CD8-positive, alpha-beta T cell (primary cell): ENCODE measurements at regions of chr2 and their contacts with region 1.

Region 1: DNA sequence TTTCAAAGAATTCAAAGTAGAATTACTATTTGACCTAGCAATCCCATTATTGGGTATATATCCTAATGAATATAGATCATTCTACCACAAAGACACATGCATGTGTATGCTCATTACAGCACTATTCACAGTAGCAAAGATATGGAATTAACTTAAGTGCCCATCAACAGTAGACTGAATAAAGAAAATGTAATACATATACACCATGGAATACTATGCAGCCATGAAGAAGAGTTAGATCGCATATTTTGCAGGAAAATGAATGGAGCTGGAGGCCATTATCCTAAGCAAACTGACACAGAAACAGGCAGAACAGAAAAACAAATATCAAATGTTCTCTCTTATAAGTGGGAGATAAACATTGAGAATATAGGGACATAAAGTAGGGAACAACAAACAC is 519.2 kb upstream of the REG3G start:
- DNase-seq: no peak
- ATAC-seq: no peak
- H3K4me3 ChIP-seq: no peak overlapping the region
- H3K4me3 Mint-ChIP-seq: no peak overlapping the region
- H3K27ac ChIP-seq: no peak overlapping the region
- H3K27ac Mint-ChIP-seq: no peak overlapping the region
- H3K4me1 ChIP-seq: no peaks in the 10 kb centered on the region
- H3K4me1 Mint-ChIP-seq: no peaks in the 10 kb centered on the region
- H3K27me3 ChIP-seq: no peaks in the 10 kb centered on the region
- H3K27me3 Mint-ChIP-seq: no peaks in the 10 kb centered on the region
- CTCF ChIP-seq: no peak

Region 2: DNA sequence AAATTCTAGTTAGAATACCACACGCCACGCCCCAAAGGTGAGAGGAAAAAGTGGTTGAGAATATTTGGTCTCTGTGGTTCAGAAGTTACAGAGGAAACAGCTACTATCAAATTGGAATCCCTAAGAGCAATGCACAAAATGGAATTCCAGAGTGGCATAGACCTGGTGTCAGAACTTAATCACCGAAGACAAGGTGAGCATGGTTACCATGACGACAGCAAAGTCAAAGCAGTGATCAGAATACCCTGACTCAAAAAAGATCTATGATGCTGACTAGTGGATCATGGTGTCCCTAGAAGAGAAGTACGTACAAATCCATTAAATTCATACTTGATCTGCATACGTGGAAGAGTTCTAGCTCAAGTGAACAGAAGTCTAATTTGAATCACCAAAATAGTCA is 998.6 kb before region 1 on chr2:
- CTCF ChIA-PET with region 1: no interaction called
- POLR2A ChIA-PET with region 1: no interaction called
- intact Hi-C with region 1: loop called in 1 of 2 experiments (anchors 5 kb)
- DNase-seq: no peak
- ATAC-seq: no peak
- H3K4me3 ChIP-seq: no peak overlapping the region
- H3K4me3 Mint-ChIP-seq: no peak overlapping the region
- H3K27ac ChIP-seq: no peak overlapping the region
- H3K27ac Mint-ChIP-seq: no peak overlapping the region
- H3K4me1 ChIP-seq: no peaks in the 10 kb centered on the region
- H3K4me1 Mint-ChIP-seq: no peaks in the 10 kb centered on the region
- H3K27me3 ChIP-seq: no peaks in the 10 kb centered on the region
- H3K27me3 Mint-ChIP-seq: no peaks in the 10 kb centered on the region
- CTCF ChIP-seq: no peak

Region 3: GRCh38 chr2:78418021-78418420 is 88.3 kb before region 1 on chr2:
- CTCF ChIA-PET with region 1: no interaction called
- POLR2A ChIA-PET with region 1: no interaction called
- intact Hi-C with region 1: no loop called
- DNase-seq: no peak
- ATAC-seq: no peak
- H3K4me3 ChIP-seq: no peak overlapping the region
- H3K4me3 Mint-ChIP-seq: no peak overlapping the region
- H3K27ac ChIP-seq: no peak overlapping the region
- H3K27ac Mint-ChIP-seq: no peak overlapping the region
- H3K4me1 ChIP-seq: no peaks in the 10 kb centered on the region
- H3K4me1 Mint-ChIP-seq: no peaks in the 10 kb centered on the region
- H3K27me3 ChIP-seq: no peaks in the 10 kb centered on the region
- H3K27me3 Mint-ChIP-seq: no peaks in the 10 kb centered on the region
- CTCF ChIP-seq: no peak